ENCODE measurements at regions of chr5 and their contacts with region 1.

Region 1: DNA sequence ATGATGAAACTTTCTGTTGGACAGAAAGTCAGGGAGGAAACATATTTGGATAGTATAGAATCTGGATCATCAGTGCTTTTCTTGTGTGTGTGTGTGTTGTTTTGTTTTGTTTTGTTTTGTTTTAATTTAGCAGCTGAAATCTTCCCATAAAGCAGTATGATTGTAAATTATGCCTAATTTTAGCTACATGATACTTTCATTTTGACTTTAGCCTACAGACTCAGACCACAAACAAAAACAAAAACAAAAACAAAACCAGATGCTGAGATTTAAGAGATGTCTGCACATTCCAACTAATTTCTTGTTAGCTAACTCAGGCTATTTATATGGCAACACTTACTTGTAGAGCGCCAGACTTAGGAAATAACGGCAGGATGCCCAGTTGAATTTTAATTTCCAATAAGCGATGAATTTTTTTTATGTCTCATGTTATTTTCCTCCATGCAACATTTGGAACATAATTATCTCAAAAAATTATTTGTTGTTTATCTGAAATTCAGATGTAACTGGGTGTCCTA is 119.5 kb upstream of the TRPC7 start:
- DNase-seq: no peak

Region 2: DNA sequence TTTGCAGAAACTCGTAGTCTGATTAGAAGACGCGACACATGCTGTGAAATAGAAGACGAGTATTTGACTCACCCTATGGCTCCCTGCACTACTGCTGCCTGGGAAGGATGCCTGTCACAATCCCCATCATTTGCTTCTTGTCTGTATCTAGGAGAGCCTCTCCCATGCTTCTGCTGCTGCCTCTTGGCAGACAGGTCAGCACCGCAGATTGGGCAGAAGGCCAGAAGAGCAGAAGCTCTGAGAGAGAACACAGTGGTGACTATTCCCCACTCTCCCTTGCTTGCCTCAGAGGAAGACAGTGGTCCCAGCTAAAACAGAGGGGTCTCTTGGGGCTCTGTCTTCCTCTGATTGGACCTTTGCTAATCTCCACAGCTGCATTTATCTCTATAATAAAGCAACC is 207.9 kb before region 1 on chr5:
- intact Hi-C with region 1: loop called in 1 of 2 experiments (anchors 5 kb)
- DNase-seq: no peak